PC-9 (cell line): ENCODE measurements at regions of chr6 and their contacts with region 1.

Region 1: GRCh38 chr6:13725570-13725969 is 13.9 kb upstream of the RANBP9 start:
- DNase-seq: peak; percentile 86 to 100
- H3K4me3 ChIP-seq: peak overlapping the region; percentile 47; the same call in 1 of the 2 replicates
- H3K27ac ChIP-seq: peak overlapping the region; percentile 96
- H3K4me1 ChIP-seq: peaks cover 88% of the 10 kb centered on the region
- H3K27me3 ChIP-seq: no peaks in the 10 kb centered on the region
- CTCF ChIP-seq: no peak

Region 2: DNA sequence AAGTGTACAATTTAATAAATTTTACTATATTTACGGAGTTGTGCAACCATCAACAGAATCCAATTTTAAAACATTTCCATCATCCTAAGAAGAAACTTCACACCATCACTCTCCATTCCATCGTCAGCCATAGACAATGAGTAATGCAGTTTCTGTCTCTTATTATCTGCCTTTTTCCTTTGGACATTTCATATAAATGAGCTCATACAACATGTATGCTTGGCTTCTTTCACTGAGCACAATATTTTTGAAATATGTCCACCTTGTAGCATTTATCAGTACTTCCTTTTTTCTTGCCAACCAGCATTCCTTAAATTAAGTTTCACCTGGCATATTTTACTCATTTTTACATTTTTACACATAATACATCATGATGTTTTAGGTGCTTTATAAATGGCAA is 1736.2 kb before region 1 on chr6:
- CTCF ChIA-PET with region 1: no interaction called
- POLR2A ChIA-PET with region 1: no interaction called
- intact Hi-C with region 1: no loop called
- DNase-seq: no peak
- H3K4me3 ChIP-seq: no peak overlapping the region
- H3K27ac ChIP-seq: no peak overlapping the region
- H3K4me1 ChIP-seq: no peaks in the 10 kb centered on the region
- H3K27me3 ChIP-seq: no peaks in the 10 kb centered on the region
- CTCF ChIP-seq: no peak

Region 3: GRCh38 chr6:13397359-13398068 is 328.1 kb before region 1 on chr6:
- CTCF ChIA-PET with region 1: no interaction called
- POLR2A ChIA-PET with region 1: no interaction called
- intact Hi-C with region 1: loop called (anchors 2 kb)
- DNase-seq: peak in 1 of 2 experiments; percentile 57
- H3K4me3 ChIP-seq: no peak overlapping the region
- H3K27ac ChIP-seq: peak overlapping the region; percentile 76
- H3K4me1 ChIP-seq: peaks cover 49% of the 10 kb centered on the region
- H3K27me3 ChIP-seq: no peaks in the 10 kb centered on the region
- CTCF ChIP-seq: no peak; the same call in 1 of the 2 replicates

Region 4: DNA sequence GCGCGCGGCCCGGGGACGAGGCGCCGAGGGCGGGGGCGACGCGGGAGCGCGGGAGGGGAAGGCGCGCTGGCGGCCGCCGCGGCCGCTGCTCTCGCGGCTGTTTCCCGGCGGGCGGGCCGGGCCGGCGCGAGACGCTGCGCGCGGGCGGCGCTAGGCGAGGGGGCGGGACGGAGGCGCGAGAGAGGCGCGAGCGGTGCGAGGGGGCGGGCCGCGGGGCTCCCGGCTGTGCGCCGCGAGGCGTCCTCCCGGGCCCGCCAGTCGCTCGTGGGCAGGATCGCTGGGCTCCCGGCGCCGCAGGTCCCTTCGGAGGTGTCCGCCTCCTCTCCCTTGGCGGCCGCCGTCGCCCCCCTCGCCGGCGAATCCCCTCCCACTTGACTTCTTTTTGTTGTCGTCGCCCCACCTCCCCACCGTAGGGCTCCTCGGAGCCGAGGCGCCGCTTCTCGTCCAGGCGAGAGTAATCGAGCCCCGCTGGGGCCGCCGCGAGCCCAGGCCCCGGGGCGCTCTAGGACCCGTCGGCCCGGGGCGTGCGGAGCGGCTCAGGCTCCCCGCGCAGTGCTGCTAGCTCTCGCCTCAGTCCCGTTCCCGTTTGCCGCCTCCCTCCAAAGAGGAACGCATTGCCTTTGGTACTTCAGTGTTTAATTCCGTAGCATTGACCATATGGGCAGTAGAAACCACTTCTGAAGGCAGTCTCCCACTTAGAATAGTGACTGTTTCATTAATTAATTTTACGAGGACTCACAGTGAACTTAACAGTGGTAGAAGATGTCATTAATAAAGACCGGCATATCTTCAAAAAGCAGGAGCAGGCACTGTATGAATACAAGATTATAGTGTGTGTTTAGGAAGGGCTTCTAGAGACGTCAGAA is 13.6 kb before region 1 on chr6 and contains the start of gene RANBP9:
- CTCF ChIA-PET with region 1: interaction called, 6 read pairs
- POLR2A ChIA-PET with region 1: interaction called, 25 read pairs
- intact Hi-C with region 1: loop called (anchors 1 kb)
- DNase-seq: peak; percentile 61 to 93
- H3K4me3 ChIP-seq: peak within 1 kb of the TSS; percentile 87
- H3K27ac ChIP-seq: peak within 1 kb of the TSS; percentile 83
- H3K4me1 ChIP-seq: peaks cover 56% of the 10 kb centered on the region
- H3K27me3 ChIP-seq: no peaks in the 10 kb centered on the region
- CTCF ChIP-seq: no peak
- total RNA-seq, gene RANBP9: 44.0 and 73.8 TPM in 2 replicates

Region 5: DNA sequence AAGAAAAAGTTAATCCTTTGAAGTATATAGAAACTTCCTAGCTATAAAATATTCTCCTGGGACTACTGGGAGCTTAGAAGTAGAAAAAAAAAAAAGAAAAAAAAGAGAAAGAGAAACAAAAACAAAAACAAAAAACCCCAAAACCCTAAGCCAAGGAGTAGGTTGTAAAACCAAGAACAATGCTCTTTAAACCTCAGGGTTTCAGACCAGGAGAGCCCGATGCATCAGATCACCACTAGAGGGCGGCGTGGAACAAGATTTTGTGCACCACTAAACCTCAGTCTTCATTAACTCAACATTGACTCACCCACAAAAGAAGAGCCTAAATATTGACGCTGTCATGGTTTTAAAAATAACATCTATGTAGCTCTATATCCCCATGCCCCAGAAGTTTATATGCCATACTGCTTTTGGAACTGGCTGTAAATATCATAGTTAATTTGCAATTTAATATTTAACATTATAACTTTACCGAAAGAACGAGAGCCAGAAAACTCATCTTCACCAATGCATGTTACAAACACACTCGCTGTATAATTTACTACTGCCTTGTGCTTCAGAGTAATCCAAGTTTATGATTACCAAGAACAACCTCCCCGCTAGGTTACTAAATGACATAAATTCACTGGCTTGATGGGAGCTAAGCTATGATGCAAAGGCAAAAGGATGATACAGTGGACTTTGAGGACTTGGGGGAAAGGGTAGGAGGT is 69.6 kb after region 1 on chr6:
- CTCF ChIA-PET with region 1: interaction called, 6 read pairs
- POLR2A ChIA-PET with region 1: no interaction called
- intact Hi-C with region 1: loop called (anchors 1 kb)
- DNase-seq: peak; percentile 71 to 77
- H3K4me3 ChIP-seq: no peak overlapping the region
- H3K27ac ChIP-seq: peak overlapping the region; percentile 49
- H3K4me1 ChIP-seq: peaks cover 41% of the 10 kb centered on the region
- H3K27me3 ChIP-seq: no peaks in the 10 kb centered on the region
- CTCF ChIP-seq: peak; percentile 94

Region 6: GRCh38 chr6:15327271-15327670 is 1601.7 kb after region 1 on chr6:
- CTCF ChIA-PET with region 1: no interaction called
- POLR2A ChIA-PET with region 1: interaction called, 17 read pairs
- intact Hi-C with region 1: no loop called
- DNase-seq: no peak
- H3K4me3 ChIP-seq: no peak overlapping the region
- H3K27ac ChIP-seq: no peak overlapping the region
- H3K4me1 ChIP-seq: peaks cover 51% of the 10 kb centered on the region
- H3K27me3 ChIP-seq: no peaks in the 10 kb centered on the region
- CTCF ChIP-seq: no peak